CD4-positive, alpha-beta T cell (primary cell): ENCODE measurements at regions of chrX and their contacts with region 1.

Region 1: DNA sequence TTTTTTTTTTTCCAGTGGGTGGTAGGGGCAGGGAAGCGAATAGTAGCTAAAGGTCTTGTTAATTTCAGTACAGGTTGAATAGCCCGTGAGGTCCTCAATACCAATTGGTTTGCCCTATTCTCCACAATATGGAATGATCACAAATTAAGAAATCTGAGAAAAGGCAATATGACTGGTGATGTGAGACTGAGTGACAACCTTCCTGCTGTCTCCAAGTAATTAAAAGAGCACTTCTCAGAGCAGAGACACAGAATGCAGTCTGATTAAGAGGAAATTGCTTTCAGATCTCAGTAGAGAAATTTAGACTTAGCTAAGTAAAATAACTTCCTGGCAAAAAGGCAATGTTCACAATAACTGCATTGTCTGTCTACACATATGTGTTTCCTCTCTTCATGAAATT is 23.0 kb downstream of the GPR174 start:
- DNase-seq: peak in 1 of 14 experiments; percentile 54
- ATAC-seq: peak; percentile 41
- H3K4me3 ChIP-seq: peak overlapping the region; percentile 5
- H3K4me3 Mint-ChIP-seq: peak overlapping the region; percentile 76
- H3K27ac ChIP-seq: peak overlapping the region; percentile 69 to 70
- H3K27ac Mint-ChIP-seq: peak overlapping the region; percentile 97
- H3K4me1 ChIP-seq: peaks cover 46% of the 10 kb centered on the region
- H3K4me1 Mint-ChIP-seq: peaks cover 94% of the 10 kb centered on the region
- H3K27me3 ChIP-seq: no peaks in the 10 kb centered on the region
- H3K27me3 Mint-ChIP-seq: no peaks in the 10 kb centered on the region
- CTCF ChIP-seq: no peak

Region 2: GRCh38 chrX:79153348-79153747 is 14.1 kb before region 1 on chrX:
- CTCF ChIA-PET with region 1: interaction called, 4 read pairs
- POLR2A ChIA-PET with region 1: interaction called, 57 read pairs
- intact Hi-C with region 1: no loop called
- DNase-seq: no peak
- ATAC-seq: no peak
- H3K4me3 ChIP-seq: peak overlapping the region; percentile 80
- H3K4me3 Mint-ChIP-seq: peak overlapping the region; percentile 86
- H3K27ac ChIP-seq: peak overlapping the region; percentile 48 to 78
- H3K27ac Mint-ChIP-seq: peak overlapping the region; percentile 95
- H3K4me1 ChIP-seq: peaks cover 15% of the 10 kb centered on the region
- H3K4me1 Mint-ChIP-seq: peaks cover 80% of the 10 kb centered on the region
- H3K27me3 ChIP-seq: no peaks in the 10 kb centered on the region
- H3K27me3 Mint-ChIP-seq: no peaks in the 10 kb centered on the region
- CTCF ChIP-seq: no peak

Region 3: DNA sequence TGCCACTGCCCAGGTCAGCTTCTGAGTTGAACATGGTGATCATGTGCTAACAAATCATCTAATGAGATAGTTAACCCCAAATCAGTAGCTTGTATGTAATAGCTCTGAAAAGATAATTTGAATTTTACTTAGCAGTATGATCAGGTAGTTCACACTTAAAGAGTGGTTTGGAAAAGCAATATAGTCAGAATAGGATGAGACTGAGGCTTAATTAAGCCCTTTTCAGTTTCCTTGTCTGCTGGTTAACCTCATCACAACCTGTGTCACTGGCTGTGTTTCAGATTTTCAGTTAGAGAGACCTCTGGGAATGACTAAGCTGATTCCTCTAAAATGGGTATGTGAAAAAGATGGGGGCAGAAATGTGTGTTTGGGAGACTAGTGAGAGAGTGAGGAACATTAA is 15.2 kb after region 1 on chrX:
- CTCF ChIA-PET with region 1: interaction called, 4 read pairs
- POLR2A ChIA-PET with region 1: interaction called, 51 read pairs
- intact Hi-C with region 1: no loop called
- DNase-seq: peak in 1 of 14 experiments; percentile 40
- ATAC-seq: no peak
- H3K4me3 ChIP-seq: no peak overlapping the region
- H3K4me3 Mint-ChIP-seq: peak overlapping the region; percentile 22
- H3K27ac ChIP-seq: peak overlapping the region; percentile 29 to 58
- H3K27ac Mint-ChIP-seq: peak overlapping the region; percentile 78
- H3K4me1 ChIP-seq: peaks cover 17% of the 10 kb centered on the region
- H3K4me1 Mint-ChIP-seq: peaks cover 76% of the 10 kb centered on the region
- H3K27me3 ChIP-seq: no peaks in the 10 kb centered on the region
- H3K27me3 Mint-ChIP-seq: no peaks in the 10 kb centered on the region
- CTCF ChIP-seq: no peak

Region 4: DNA sequence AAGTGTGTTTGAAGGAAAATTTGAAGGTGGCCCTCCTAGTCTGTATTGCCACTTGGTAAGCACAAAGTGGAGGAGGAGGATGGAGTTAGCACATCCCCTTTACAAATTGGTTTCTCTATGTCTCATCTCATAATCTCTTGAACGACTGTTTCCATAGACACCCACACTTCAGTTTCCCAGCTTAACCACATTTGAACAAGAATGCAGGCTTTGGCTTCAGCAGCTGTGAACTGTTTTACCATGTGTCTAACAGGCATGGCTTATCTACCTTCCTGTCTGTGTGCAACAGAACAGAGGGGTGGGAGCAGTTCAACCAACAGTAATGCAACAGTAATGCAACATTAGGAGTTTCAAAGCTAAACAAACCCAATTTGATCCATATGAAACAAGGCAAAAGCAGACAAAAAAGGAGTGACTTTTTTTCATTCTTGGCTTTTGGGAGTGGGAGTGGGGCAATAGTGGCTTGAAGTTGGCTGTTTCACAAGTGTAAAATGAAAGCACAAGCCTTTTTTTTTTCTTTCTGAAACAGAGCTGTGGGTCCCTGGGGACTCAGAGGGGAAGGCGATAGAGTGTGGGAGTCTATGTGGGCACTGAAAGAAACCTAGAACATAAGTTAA is 91.7 kb after region 1 on chrX:
- CTCF ChIA-PET with region 1: interaction called, 3 read pairs
- POLR2A ChIA-PET with region 1: interaction called, 10 read pairs
- intact Hi-C with region 1: loop called in 1 of 2 experiments (anchors 1 kb)
- DNase-seq: peak in 13 of 14 experiments; percentile 3 to 85 (median 34)
- ATAC-seq: peak; percentile 88
- H3K4me3 ChIP-seq: no peak overlapping the region
- H3K4me3 Mint-ChIP-seq: peak overlapping the region; percentile 84
- H3K27ac ChIP-seq: peak overlapping the region; percentile 52 to 75
- H3K27ac Mint-ChIP-seq: peak overlapping the region; percentile 99
- H3K4me1 ChIP-seq: peaks cover 16% of the 10 kb centered on the region
- H3K4me1 Mint-ChIP-seq: peaks cover 91% of the 10 kb centered on the region
- H3K27me3 ChIP-seq: no peaks in the 10 kb centered on the region
- H3K27me3 Mint-ChIP-seq: no peaks in the 10 kb centered on the region
- CTCF ChIP-seq: no peak

Region 5: DNA sequence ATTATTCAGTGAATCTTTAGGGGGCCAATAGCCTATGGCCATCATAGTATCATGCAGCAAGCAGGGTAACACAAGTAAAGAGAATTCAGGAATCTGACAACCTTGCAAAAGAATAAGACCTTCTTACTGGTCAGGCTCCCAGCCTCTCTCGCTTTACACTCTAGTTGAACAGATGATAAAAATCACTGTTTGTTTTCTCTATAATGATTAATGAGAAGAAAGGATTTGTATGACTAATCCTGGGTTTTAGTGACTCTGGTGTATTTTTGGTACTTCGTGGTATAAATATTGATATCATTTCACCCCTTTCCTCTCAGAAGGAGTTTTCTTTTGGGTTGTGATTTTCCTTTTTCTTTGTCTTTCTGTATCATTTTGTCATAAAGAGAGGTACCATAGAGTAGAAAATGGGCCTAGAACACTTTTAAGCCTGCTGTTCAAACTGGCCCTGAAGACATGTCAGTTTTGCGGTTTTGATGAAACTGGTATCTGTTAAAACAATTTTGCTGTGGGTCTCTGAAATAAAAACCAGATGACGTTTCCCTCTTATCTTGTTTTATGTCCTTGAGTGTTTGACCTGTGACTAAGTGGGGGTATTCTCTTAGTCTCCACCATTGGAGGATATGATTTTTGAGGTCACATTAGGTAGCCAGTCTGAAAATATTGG is 552.2 kb after region 1 on chrX:
- CTCF ChIA-PET with region 1: no interaction called
- POLR2A ChIA-PET with region 1: no interaction called
- intact Hi-C with region 1: no loop called
- DNase-seq: no peak
- ATAC-seq: no peak
- H3K4me3 ChIP-seq: no peak overlapping the region
- H3K4me3 Mint-ChIP-seq: no peak overlapping the region
- H3K27ac ChIP-seq: no peak overlapping the region
- H3K27ac Mint-ChIP-seq: no peak overlapping the region
- H3K4me1 ChIP-seq: no peaks in the 10 kb centered on the region
- H3K4me1 Mint-ChIP-seq: no peaks in the 10 kb centered on the region
- H3K27me3 ChIP-seq: no peaks in the 10 kb centered on the region
- H3K27me3 Mint-ChIP-seq: no peaks in the 10 kb centered on the region
- CTCF ChIP-seq: no peak